CD8-positive, alpha-beta T cell (primary cell): ENCODE measurements at regions of chr11 and their contacts with region 1.

Region 1: DNA sequence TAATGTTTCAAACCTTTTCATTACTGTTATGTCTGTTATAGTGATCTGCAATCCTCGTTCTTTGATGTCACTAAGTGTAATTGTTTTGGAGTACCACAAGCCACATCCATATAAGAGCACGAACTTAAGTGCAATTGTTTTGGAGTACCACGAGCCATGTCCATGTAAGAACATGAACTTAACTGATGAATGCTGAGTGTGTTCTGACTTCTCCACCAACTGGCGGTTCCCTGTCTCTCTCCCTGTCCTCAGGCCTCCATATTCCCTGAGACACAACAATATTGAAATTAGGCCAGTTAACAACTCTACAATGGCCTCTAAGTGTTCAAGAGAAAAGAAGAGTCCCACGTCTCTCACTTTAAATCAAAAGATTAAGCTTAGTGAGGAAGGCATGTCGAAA is 23.5 kb downstream of the TESMIN start:
- DNase-seq: no peak
- ATAC-seq: no peak
- H3K4me3 ChIP-seq: no peak overlapping the region
- H3K4me3 Mint-ChIP-seq: no peak overlapping the region
- H3K27ac ChIP-seq: no peak overlapping the region
- H3K27ac Mint-ChIP-seq: no peak overlapping the region
- H3K4me1 ChIP-seq: no peaks in the 10 kb centered on the region
- H3K4me1 Mint-ChIP-seq: no peaks in the 10 kb centered on the region
- H3K27me3 ChIP-seq: no peaks in the 10 kb centered on the region
- H3K27me3 Mint-ChIP-seq: no peaks in the 10 kb centered on the region
- CTCF ChIP-seq: no peak

Region 2: DNA sequence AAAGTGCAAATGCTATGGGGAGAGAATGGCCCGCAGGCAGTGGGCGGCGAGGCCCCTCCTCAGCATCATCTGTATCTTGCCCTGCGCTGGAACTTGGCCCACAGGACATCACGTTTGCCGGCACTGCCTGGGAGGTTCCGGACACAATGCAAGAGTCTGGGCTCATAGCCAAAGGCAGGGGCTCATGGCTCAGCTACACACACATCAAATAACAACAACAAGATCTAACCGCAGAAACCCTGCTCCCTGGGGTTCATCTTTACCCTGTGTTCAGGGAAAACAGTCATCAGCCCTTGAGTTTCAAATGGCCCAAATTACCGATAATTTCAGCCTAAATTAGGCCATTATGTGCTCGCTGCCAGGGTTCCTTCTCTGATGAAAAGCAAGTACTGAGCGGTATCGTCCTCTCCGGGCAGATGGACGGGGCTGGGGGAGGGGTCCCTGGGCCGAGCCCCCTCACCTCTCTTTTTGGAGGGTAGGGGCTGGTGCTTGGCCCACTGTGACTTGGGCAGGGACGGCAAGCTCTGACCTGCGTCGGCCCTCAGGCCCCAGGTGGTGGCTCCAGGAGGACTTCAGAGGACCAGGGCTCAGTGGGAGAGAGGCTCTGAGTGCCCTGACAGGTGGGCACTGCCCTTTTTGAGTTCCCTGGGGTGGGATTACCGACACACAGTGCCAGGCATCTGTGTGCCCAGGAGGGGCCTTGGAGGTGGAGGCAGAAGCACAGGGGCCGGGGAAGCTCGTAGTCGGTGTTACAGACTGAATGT is 68.4 kb before region 1 on chr11:
- CTCF ChIA-PET with region 1: no interaction called
- POLR2A ChIA-PET with region 1: no interaction called
- intact Hi-C with region 1: loop called in 1 of 2 experiments (anchors 2 kb)
- DNase-seq: no peak
- ATAC-seq: no peak
- H3K4me3 ChIP-seq: no peak overlapping the region
- H3K4me3 Mint-ChIP-seq: no peak overlapping the region
- H3K27ac ChIP-seq: no peak overlapping the region
- H3K27ac Mint-ChIP-seq: no peak overlapping the region
- H3K4me1 ChIP-seq: no peaks in the 10 kb centered on the region
- H3K4me1 Mint-ChIP-seq: no peaks in the 10 kb centered on the region
- H3K27me3 ChIP-seq: peaks cover 0 to 6% of the 10 kb centered on the region in 2 experiments
- H3K27me3 Mint-ChIP-seq: peaks cover 33% of the 10 kb centered on the region
- CTCF ChIP-seq: no peak